ENCODE measurements at regions of chrX and their contacts with region 1.

Region 1: GRCh38 chrX:13487731-13488523 is 81.5 kb upstream of the EGFL6 start:
- DNase-seq: peak; percentile 48
- CTCF ChIP-seq: peak; percentile 52

Region 2: GRCh38 chrX:12814420-12814819 is 673.5 kb before region 1 on chrX:
- in situ Hi-C with region 1: loop called (anchors 25 kb)
- DNase-seq: peak; percentile 58
- CTCF ChIP-seq: peak; percentile 45

Region 3: DNA sequence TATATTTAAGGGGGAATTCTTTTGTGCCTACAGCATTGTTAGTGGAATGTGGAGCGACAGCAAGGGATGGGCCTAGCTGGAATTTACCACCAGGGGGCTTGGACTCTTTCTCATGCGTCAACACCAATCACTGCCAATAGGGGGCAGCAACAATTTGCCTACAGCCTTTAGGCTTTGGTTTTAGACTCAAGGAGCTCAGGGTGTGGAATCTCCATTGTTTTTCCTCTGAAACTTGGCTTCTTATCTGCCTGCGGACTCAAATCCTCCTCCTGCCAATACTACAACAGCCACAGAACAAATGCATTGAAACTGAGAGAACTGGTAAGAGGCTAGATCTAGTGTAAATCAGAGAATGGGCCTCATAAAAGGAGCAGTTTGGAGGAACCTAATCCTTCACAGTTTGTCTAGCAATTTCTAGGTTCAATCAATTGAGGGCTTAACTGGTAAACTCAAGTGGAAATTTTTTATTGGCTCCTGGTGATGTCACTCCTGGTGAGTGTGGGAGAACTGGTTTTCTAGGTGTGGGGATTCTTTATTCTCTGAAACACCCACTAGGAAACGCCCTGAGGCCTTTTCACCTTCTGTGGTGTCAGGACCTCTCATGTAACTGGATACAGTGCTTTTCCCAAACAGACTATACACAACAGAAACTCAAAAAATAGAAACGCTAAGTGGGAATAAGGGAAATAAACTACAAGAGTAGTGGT is 540.9 kb before region 1 on chrX:
- in situ Hi-C with region 1: loop called (anchors 10 kb)
- DNase-seq: no peak
- CTCF ChIP-seq: peak; percentile 94

Region 4: DNA sequence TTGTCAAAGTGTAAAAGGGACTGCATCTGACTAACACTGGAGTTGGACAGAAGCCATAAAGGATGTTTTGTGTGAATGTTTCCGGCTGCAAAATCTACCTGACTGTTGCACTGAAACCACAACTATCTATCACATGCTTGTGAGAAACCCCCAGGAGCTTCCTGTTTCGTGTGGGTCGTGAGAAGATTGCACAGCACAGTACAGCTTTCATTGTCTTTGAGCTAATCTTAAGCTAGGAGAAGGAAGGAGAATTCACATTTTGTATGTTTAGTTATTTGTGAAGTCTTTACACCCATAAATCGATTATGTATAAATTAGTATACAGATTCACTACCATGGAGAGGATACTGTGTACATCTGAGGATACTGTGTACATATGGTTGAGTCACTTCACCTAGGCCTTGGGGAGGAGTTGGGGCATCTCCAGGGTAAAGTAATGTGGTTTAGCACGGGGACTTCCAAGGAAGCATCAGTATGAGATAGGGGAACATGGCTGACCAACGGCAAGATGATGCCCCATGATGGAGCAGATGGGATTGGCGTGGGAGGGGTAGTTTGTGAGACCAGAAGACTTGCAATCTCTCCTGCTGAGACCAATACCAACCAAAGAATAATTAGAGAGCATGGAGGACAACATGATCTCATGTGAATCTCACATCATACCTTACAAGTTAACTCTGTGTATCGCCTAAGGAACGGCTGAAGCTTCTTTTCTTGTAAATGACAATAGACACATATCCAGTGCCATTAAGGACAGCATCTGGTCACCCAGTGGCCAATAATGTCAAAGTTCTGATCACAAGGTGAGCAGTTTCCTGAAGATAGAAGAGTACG is 400.4 kb before region 1 on chrX:
- in situ Hi-C with region 1: loop called (anchors 5 kb)
- DNase-seq: peak; percentile 53
- CTCF ChIP-seq: no peak

Region 5: DNA sequence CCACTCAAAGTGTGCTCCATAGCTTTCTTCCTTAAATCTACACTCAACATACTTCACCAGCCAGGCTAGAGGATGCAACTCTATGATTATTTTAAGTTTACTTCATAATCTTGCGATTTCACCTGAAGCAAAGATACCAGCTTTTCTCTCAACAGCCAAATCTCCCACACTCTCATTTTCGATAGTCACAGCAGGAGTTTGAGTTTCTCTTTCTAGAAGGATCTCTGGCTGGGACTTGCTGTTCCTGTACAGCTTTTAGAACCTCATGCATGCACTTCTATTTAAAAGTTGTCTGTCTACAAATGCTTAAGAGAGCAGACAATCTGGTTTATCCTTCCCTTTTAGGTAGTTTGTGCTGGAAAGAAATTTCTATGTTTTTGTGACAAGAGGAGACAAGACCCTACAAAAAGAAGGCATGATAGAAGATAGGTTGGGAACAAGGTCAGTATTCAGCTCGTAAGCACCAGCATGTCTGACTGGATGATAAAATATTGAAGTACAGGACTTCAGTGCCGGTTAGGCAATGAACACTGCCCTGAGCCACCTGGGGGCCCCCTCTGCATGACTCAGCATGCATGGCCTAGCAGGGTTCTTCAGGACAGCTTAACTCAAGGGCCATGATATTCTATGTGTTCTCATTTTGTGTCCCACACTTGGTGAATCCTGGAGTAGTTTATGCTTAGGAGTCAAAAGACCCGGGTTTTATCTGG is 233.7 kb before region 1 on chrX:
- in situ Hi-C with region 1: loop called (anchors 10 kb)
- DNase-seq: no peak
- CTCF ChIP-seq: peak; percentile 34

Region 6: DNA sequence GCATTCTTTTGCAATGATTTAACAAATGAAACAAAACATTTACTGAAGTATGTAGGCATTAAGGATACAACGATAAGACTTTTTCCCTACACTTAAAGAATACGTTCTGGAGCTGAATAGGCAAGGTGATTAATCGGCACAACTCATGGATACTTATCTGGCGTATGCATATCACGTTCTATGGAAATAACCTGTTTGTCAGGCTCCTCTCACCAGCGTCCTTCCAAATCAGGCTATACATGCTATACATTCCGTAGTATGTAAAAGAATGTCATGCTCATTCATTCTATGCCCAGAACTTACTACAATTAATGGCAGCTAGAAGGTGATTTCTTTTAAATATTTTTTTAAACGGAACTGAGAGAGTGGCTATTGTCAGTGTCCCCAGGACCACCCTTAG is 139.4 kb after region 1 on chrX:
- in situ Hi-C with region 1: no loop called
- DNase-seq: no peak
- CTCF ChIP-seq: no peak